BJ (cell line): ENCODE measurements at regions of chr12 and their contacts with region 1.

Region 1: GRCh38 chr12:122793685-122794106 is 19.3 kb downstream of the CCDC62 start:
- DNase-seq: no peak
- H3K4me3 ChIP-seq: no peak overlapping the region
- H3K27me3 ChIP-seq: no peaks in the 10 kb centered on the region
- CTCF ChIP-seq: peak; percentile 62

Region 2: DNA sequence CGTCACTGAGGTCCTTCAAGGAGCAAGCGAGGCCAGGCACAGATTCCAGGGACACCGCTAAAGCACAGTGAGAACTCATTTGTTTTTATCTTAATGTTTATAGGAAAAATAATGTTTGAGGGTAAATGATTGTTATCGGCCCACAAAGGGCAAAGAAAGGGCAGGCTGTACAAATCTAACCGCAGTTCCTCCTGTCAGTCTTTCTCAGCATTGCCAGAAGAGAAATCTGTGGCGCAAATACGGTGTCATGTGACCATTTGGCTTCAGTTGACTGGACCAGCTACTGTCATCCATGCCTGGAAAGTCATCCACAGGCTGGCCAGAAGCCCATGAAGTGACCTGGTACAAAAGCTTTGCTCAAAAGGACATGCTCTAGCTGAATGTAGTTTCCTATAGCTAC is 134.2 kb before region 1 on chr12:
- CTCF ChIA-PET with region 1: no interaction called
- POLR2A ChIA-PET with region 1: no interaction called
- DNase-seq: no peak
- H3K4me3 ChIP-seq: no peak overlapping the region
- H3K27me3 ChIP-seq: no peaks in the 10 kb centered on the region
- CTCF ChIP-seq: no peak

Region 3: GRCh38 chr12:122803937-122804336 is 10.2 kb after region 1 on chr12:
- CTCF ChIA-PET with region 1: interaction called, 23 read pairs
- POLR2A ChIA-PET with region 1: no interaction called
- DNase-seq: no peak
- H3K4me3 ChIP-seq: no peak overlapping the region
- H3K27me3 ChIP-seq: no peaks in the 10 kb centered on the region
- CTCF ChIP-seq: no peak

Region 4: DNA sequence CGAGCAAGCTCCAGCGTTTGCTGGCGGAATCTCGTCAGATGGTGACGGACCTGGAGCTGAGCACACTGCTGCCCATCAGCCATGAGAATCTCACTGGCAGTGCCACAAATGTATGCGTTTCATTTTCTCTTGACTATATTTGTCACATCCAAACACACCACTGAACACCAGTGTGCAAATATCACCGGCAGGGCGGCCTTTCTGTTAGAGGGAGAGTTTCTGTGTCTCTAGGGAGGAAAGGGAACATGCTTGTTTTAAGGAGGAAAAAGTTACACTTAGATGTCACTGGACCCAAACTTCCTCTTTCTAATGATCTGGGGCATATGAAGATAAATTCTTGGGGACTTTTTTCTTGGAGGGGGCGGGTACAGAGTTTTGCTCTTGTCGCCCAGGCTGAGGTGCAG is 19.6 kb after region 1 on chr12:
- CTCF ChIA-PET with region 1: interaction called, 9 read pairs
- POLR2A ChIA-PET with region 1: interaction called, 17 read pairs
- DNase-seq: no peak
- H3K4me3 ChIP-seq: no peak overlapping the region
- H3K27me3 ChIP-seq: no peaks in the 10 kb centered on the region
- CTCF ChIP-seq: no peak

Region 5: DNA sequence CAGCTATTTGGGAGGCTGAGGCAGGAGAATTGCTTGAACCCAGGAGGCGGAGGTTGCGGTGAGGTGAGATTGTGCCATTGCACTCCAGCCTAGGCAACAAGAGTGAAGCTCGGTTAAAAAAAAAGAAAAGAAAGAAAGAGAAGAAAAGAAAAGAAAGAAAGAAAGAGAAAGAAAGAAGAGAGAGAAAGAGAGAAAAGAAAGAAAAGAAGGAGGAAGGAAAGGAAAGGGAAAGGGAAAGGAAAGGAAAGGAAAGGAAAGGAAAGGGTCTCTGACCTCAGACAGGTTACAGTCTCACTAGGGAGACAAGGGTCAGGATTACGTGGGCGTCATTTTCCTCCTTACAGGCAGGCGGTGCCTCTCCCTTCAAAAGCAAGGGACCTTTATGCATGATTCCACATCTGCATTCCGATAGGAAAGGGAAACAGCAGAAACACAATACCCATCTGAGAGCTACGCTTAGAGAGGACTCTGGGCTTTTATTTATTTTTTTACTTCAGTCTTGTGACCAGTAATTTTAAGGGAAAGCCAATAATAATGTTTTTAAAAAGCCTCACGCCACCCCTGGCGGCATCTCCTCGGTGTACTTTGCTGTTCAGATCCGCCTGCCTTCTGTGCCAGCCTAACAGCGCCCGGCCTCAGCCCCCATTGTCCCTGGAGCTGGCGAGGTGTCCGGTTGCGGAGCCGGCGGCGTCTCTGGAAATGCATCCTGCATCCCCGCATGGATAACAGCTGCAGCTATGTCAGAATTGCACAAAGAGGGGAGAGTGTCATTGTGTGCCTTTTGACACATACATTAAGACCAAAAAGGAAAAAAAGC is 40.6 kb after region 1 on chr12:
- CTCF ChIA-PET with region 1: interaction called, 21 read pairs
- POLR2A ChIA-PET with region 1: no interaction called
- DNase-seq: no peak
- H3K4me3 ChIP-seq: peak overlapping the region; percentile 68
- H3K27me3 ChIP-seq: no peaks in the 10 kb centered on the region
- CTCF ChIP-seq: peak; percentile 30; the same call in 1 of the 2 replicates

Region 6: GRCh38 chr12:122946690-122947341 is 153.1 kb after region 1 on chr12:
- CTCF ChIA-PET with region 1: interaction called, 10 read pairs
- POLR2A ChIA-PET with region 1: no interaction called
- DNase-seq: peak; percentile 98
- H3K4me3 ChIP-seq: no peak overlapping the region
- H3K27me3 ChIP-seq: no peaks in the 10 kb centered on the region
- CTCF ChIP-seq: peak; percentile 64

Region 7: GRCh38 chr12:122951979-122952892 is 158.5 kb after region 1 on chr12:
- CTCF ChIA-PET with region 1: interaction called, 13 read pairs
- POLR2A ChIA-PET with region 1: no interaction called
- DNase-seq: no peak
- H3K4me3 ChIP-seq: no peak overlapping the region
- H3K27me3 ChIP-seq: no peaks in the 10 kb centered on the region
- CTCF ChIP-seq: peak; percentile 94